Endothelial cell of umbilical vein (primary cell): ENCODE measurements at regions of chr6 and their contacts with region 1.

Region 1: GRCh38 chr6:188821-189655 is 103.2 kb upstream of the DUSP22 start:
- DNase-seq: peak; percentile 59
- H3K4me3 ChIP-seq: no peak overlapping the region
- H3K27ac ChIP-seq: no peak overlapping the region
- H3K4me1 ChIP-seq: no peaks in the 10 kb centered on the region
- H3K27me3 ChIP-seq: no peaks in the 10 kb centered on the region
- CTCF ChIP-seq: peak; percentile 79 to 87
- POLR2A ChIP-seq: no peak

Region 2: DNA sequence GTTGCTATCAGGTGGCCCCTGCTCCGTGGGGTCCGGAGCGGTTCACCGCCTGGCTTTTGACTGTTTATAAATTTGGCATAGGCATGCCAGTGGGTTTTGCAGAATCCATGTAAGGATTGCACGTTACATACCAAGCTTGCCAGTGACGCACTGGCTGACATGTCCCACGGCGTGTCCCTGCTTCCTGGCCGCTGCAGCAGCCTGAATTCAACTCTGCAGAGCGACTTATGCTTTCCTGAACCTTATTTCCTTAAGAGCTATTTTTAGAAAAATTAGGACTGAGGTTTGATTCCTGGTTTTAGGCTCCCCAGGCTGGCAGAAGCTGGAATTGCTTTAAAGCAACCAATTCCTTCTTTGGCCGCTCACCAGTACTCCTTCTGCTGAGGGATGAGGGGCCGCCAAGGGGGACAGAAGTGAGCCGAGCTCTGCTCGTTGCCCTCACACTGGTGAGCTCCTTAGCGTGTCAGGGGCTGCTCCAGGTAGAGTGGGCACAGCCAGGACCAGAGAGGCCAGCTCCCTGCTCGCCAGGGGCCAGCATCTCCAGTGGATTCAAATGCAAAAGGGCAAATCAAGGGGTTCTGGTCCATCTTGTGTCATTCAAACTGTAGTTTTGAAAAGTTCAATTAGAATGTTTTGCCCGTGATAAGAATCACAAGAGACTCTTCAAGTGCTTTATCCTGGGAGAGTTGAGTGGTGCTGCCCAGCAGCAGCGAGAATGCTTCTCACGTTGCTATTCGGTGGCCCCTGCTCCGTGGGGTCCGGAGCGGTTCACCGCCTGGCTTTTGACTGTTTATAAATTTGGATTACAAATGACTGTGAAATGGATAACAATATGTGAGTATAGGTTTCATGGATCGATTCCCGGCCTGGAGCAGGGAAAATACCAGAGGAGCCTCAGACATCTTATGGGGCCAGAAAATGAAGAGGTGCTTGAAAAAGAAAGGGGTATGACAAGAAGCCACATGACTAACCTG is 185.0 kb after region 1 on chr6:
- CTCF ChIA-PET with region 1: interaction called, 3 read pairs
- POLR2A ChIA-PET with region 1: no interaction called
- dilution Hi-C with region 1: no loop called
- intact Hi-C with region 1: loop called (anchors 5 kb)
- DNase-seq: no peak
- H3K4me3 ChIP-seq: no peak overlapping the region
- H3K27ac ChIP-seq: no peak overlapping the region
- H3K4me1 ChIP-seq: no peaks in the 10 kb centered on the region
- H3K27me3 ChIP-seq: peaks cover 0 to 7% of the 10 kb centered on the region in 2 experiments
- CTCF ChIP-seq: no peak
- POLR2A ChIP-seq: no peak

Region 3: GRCh38 chr6:408599-409102 is 219.6 kb after region 1 on chr6:
- CTCF ChIA-PET with region 1: interaction called, 119 read pairs
- POLR2A ChIA-PET with region 1: no interaction called
- dilution Hi-C with region 1: no loop called
- intact Hi-C with region 1: loop called (anchors 1 kb)
- DNase-seq: peak; percentile 26
- H3K4me3 ChIP-seq: no peak overlapping the region
- H3K27ac ChIP-seq: no peak overlapping the region
- H3K4me1 ChIP-seq: no peaks in the 10 kb centered on the region
- H3K27me3 ChIP-seq: peaks cover 3 to 4% of the 10 kb centered on the region in 2 experiments
- CTCF ChIP-seq: peak in 1 of 2 donors; percentile 1
- POLR2A ChIP-seq: no peak

Region 4: DNA sequence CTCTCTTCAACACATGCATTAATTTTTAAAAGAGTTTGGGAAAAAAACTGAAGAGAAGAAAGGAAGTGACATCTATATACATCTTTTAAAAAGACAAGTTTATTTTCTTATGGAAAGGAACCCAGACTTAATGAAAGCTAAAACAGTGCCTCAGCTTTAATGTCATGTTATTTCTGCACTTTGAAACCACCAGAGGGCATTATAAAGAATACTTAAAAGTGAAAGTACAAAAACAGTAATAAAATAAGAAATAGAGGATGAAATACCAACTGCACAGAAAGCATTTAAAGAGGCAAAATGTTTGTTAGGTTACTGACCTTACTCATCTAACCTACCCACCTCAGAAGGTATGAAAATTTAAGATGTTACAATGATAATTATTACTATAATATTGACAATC is 369.1 kb after region 1 on chr6:
- CTCF ChIA-PET with region 1: no interaction called
- POLR2A ChIA-PET with region 1: no interaction called
- dilution Hi-C with region 1: no loop called
- intact Hi-C with region 1: loop called (anchors 5 kb)
- DNase-seq: no peak
- H3K4me3 ChIP-seq: no peak overlapping the region
- H3K27ac ChIP-seq: no peak overlapping the region
- H3K4me1 ChIP-seq: peaks cover 17% of the 10 kb centered on the region
- H3K27me3 ChIP-seq: no peaks in the 10 kb centered on the region
- CTCF ChIP-seq: no peak
- POLR2A ChIP-seq: no peak

Region 5: GRCh38 chr6:593139-593906 is 404.3 kb after region 1 on chr6:
- CTCF ChIA-PET with region 1: interaction called, 12 read pairs
- POLR2A ChIA-PET with region 1: no interaction called
- dilution Hi-C with region 1: no loop called
- intact Hi-C with region 1: no loop called
- DNase-seq: peak; percentile 67
- H3K4me3 ChIP-seq: no peak overlapping the region
- H3K27ac ChIP-seq: no peak overlapping the region
- H3K4me1 ChIP-seq: no peaks in the 10 kb centered on the region
- H3K27me3 ChIP-seq: no peaks in the 10 kb centered on the region
- CTCF ChIP-seq: peak; percentile 15 to 27
- POLR2A ChIP-seq: no peak

Region 6: GRCh38 chr6:786946-787763 is 598.1 kb after region 1 on chr6:
- CTCF ChIA-PET with region 1: no interaction called
- POLR2A ChIA-PET with region 1: no interaction called
- dilution Hi-C with region 1: no loop called
- intact Hi-C with region 1: loop called (anchors 2 kb)
- DNase-seq: peak; percentile 29
- H3K4me3 ChIP-seq: no peak overlapping the region
- H3K27ac ChIP-seq: no peak overlapping the region
- H3K4me1 ChIP-seq: no peaks in the 10 kb centered on the region
- H3K27me3 ChIP-seq: no peaks in the 10 kb centered on the region
- CTCF ChIP-seq: peak; percentile 56 to 58
- POLR2A ChIP-seq: no peak

Region 7: GRCh38 chr6:1396952-1397868 is 1208.2 kb after region 1 on chr6:
- CTCF ChIA-PET with region 1: interaction called, 14 read pairs
- POLR2A ChIA-PET with region 1: no interaction called
- dilution Hi-C with region 1: no loop called
- intact Hi-C with region 1: loop called (anchors 2 kb)
- DNase-seq: peak; percentile 68
- H3K4me3 ChIP-seq: no peak overlapping the region
- H3K27ac ChIP-seq: no peak overlapping the region
- H3K4me1 ChIP-seq: no peaks in the 10 kb centered on the region
- H3K27me3 ChIP-seq: peaks cover 41 to 46% of the 10 kb centered on the region in 2 experiments
- CTCF ChIP-seq: peak; percentile 97 to 99
- POLR2A ChIP-seq: no peak